ENCODE measurements at regions of chr6 and their contacts with region 1.

Region 1: GRCh38 chr6:30742316-30743098 is at the start of gene FLOT1:
- DNase-seq: peak; percentile 89
- ATAC-seq: peak; percentile 88
- H3K4me3 Mint-ChIP-seq: peak within 1 kb of the TSS; percentile 89
- H3K27ac Mint-ChIP-seq: peak within 1 kb of the TSS; percentile 64
- H3K4me1 Mint-ChIP-seq: peaks cover 33% of the 10 kb centered on the region
- H3K27me3 Mint-ChIP-seq: no peaks in the 10 kb centered on the region
- CTCF ChIP-seq: no peak
- total RNA-seq, gene FLOT1: 49.1 and 52.0 TPM in 2 replicates

Region 2: DNA sequence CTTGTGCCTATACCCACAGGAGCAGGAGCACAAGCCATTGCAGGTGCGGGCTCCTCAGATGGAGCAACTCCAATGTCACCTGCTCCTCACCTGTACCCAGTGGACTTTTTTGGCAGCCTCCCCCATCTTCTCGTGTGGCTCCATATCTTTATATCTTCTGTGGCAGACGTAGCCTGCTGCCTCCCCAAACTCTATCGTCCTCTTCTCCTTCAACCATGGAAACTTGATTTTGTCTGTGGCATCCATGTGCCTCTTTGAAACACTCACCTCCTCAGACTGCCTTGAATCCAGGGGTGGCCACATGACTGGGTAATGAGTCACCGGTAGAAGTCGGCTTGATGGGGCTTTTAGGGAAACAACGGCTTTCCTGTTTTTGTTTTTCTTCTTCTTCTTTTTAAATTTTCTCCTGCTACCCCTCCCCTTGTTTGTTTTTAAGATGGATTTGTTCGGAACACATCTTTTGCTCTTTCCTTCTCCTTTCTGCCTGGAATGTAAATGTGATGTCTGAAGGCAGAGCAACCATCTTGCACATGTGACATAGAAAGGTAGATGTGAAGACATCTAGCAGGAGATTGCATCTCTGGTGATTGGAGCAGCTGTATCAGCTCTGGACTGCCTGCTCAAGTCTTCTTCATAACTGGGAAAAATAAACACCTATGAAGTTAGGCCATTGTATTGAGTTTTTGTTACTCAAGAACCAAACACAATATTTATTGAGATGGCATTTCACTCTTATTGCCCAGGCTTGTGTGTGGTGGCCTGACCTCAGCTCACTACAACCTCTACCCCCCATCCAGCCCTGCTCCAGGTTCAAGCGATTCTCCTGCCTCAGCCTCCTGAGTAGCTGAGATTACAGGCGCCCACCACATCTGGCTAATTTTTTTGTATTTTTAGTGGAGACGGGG is 71.9 kb after region 1 on chr6:
- CTCF ChIA-PET with region 1: no interaction called
- POLR2A ChIA-PET with region 1: no interaction called
- intact Hi-C with region 1: loop called (anchors 5 kb)
- DNase-seq: no peak
- ATAC-seq: no peak
- H3K4me3 Mint-ChIP-seq: no peak overlapping the region
- H3K27ac Mint-ChIP-seq: no peak overlapping the region
- H3K4me1 Mint-ChIP-seq: peaks cover 35% of the 10 kb centered on the region
- H3K27me3 Mint-ChIP-seq: no peaks in the 10 kb centered on the region
- CTCF ChIP-seq: no peak

Region 3: DNA sequence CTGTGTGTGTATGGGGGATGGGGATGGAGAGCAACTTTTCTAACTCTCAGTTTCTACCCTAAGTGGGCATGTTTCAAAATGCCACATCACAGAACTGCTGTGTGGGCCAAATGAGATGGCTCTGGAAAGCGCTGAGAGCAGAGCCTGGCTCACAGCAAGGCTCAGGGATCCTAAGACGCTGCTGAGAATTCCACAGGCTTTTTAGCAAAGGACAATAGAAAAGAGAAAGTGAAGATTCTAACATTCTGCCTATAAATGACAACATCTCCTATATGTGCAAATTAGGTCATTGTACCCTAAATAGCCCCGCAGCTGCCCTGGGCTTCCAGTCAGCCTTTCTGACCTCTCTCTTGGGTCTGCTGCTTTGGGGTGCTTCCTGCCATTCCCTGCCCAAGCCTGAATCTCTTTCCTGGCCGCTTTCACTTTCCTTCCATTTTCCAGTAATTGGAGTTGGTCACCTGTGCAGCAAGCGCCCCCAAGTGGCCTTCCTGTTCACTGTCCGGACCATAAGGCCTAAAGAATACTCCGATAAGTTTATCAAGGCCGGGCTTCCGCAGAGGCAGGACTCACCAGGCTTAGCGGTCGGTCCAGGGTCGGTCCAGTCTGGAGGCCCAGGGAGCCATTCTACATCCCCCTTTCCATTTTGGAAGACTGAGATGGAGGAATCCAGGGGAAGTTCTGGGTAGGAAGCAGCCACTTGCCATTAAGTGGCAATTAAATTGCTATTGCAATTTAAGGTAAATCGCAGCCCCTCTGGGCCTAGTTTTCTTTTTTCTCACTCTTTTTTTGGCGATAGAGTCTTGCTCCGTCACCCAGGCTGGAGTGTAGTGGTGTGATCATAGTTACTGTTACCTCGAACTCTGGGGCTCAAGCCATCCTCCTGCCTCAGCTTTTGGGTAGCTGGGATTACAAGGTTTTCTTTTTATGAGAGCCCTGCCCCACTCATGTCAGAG is 135.2 kb after region 1 on chr6:
- CTCF ChIA-PET with region 1: no interaction called
- POLR2A ChIA-PET with region 1: no interaction called
- intact Hi-C with region 1: loop called (anchors 1 kb)
- DNase-seq: peak; percentile 51
- ATAC-seq: peak; percentile 84
- H3K4me3 Mint-ChIP-seq: no peak overlapping the region
- H3K27ac Mint-ChIP-seq: no peak overlapping the region
- H3K4me1 Mint-ChIP-seq: peaks cover 37% of the 10 kb centered on the region
- H3K27me3 Mint-ChIP-seq: no peaks in the 10 kb centered on the region
- CTCF ChIP-seq: peak; percentile 19

Region 4: DNA sequence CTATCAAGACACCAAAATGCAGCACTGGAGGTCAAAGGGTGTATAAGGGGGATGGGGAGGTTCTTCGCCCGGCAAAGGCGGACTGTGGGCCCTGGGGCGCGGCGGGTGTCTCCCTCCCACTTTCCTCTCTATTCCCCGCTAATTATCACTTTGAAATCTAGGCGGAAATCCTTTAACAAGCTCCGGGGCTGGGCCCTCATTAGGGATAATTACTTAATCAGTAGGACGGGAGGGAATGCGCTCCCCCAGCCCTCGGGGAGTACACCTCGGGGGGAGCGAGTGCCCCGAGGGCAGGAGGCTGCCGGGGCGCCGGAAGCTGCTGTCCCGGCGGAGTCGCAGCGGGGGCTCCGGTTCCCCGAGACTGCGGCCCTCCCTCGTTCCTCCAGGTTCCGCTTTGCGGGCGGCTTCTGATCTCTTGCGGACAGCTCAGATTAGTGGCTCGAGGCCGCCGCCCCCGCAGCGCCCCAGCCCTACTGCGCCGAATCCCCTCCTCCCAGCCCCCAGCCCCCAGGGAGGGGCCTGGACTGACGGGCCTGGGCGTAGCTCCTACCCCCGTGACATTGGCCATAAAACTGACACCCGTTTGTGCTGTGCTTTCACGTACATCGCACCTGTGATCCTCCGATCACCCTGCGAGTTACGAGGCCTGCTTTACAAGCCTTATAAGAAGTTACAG is 213.0 kb after region 1 on chr6:
- CTCF ChIA-PET with region 1: no interaction called
- POLR2A ChIA-PET with region 1: no interaction called
- intact Hi-C with region 1: loop called (anchors 5 kb)
- DNase-seq: peak; percentile 72
- ATAC-seq: peak; percentile 93
- H3K4me3 Mint-ChIP-seq: peak overlapping the region; percentile 82
- H3K27ac Mint-ChIP-seq: peak overlapping the region; percentile 82
- H3K4me1 Mint-ChIP-seq: peaks cover 21% of the 10 kb centered on the region
- H3K27me3 Mint-ChIP-seq: peaks cover 5% of the 10 kb centered on the region
- CTCF ChIP-seq: no peak

Region 5: GRCh38 chr6:31087494-31088089 is 345.1 kb after region 1 on chr6:
- CTCF ChIA-PET with region 1: interaction called, 4 read pairs
- POLR2A ChIA-PET with region 1: no interaction called
- intact Hi-C with region 1: loop called (anchors 2 kb)
- DNase-seq: peak; percentile 67
- ATAC-seq: peak; percentile 96
- H3K4me3 Mint-ChIP-seq: no peak overlapping the region
- H3K27ac Mint-ChIP-seq: no peak overlapping the region
- H3K4me1 Mint-ChIP-seq: peaks cover 4% of the 10 kb centered on the region
- H3K27me3 Mint-ChIP-seq: peaks cover 17% of the 10 kb centered on the region
- CTCF ChIP-seq: peak; percentile 37

Region 6: GRCh38 chr6:32369675-32370074 is 1627.2 kb after region 1 on chr6:
- CTCF ChIA-PET with region 1: no interaction called
- POLR2A ChIA-PET with region 1: no interaction called
- intact Hi-C with region 1: no loop called
- DNase-seq: no peak
- ATAC-seq: no peak
- H3K4me3 Mint-ChIP-seq: no peak overlapping the region
- H3K27ac Mint-ChIP-seq: no peak overlapping the region
- H3K4me1 Mint-ChIP-seq: no peaks in the 10 kb centered on the region
- H3K27me3 Mint-ChIP-seq: no peaks in the 10 kb centered on the region
- CTCF ChIP-seq: no peak

Measured in activated B cell treated with CpG ODN at 0.5 μM for 24 hours (primary cell).